Left cardiac atrium (tissue), 4 donors: ENCODE measurements at regions of chr9 and their contacts with region 1.

Region 1: GRCh38 chr9:116149844-116150243 is 3.7 kb upstream of the PAPPA start:
- DNase-seq: no peak
- ATAC-seq: no peak

Region 2: DNA sequence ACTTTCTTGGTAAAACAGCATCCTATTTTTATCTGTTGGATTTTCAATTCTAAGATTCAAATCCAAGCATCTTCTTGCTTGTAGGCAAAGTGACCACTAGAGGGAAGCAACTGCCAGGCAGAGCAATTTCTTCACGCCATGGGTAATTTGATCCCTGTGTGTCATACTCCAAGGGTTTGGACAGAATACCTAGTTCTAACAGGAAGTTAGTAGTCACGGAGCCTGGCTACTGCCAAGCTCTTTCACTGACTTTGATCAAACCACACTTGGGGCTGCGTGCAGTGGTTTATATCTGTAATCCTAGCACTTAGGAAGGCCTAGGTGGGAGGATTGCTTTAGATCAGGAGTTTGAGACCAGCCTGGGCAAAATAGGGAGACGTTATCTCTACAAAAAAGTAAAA is 558.3 kb before region 1 on chr9:
- intact Hi-C with region 1: loop called in 1 of 2 experiments (anchors 5 kb)
- DNase-seq: peak; percentile 62
- ATAC-seq: peak; percentile 88 to 92

Region 3: GRCh38 chr9:115883457-115884329 is 266.2 kb before region 1 on chr9:
- intact Hi-C with region 1: loop called in 1 of 2 experiments (anchors 10 kb)
- DNase-seq: no peak
- ATAC-seq: peak; percentile 38 to 68

Region 4: DNA sequence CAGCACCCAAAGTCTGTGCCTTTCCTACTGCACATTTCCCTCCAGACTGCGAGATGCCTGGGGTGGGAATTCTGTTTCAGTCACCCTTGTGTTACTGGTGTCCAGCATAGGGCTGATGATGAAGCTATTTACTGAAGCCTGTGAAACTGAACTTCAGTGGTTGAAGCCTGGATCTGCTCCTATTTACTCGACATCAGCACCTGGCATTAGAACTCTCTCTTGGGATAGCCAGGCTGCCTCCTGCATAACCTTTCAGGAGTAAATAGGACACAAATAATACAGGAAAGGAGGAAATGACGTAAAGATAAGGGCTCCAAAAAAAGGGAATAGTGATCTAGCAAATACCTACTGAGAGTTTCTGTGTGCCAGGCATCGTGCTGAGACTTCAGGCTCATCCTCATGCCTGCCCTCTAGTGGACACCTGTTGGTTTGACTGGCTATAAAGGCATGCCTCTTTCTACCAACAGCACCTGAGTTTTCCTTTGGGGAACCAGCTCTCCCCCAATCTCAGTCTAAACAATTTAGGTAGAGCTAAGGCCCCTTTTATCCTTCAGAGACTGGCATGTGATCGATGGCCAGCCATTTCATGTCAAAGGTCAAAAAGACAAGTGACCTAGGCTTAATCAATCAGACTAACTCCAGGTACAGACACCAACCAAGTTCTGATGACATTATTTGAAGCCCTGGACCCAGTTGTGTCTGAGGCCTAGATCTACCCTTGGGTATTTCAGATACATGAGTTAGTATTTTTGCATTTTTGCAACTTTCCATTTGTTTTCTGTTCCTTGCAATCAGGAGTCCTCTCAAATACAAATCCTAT is 345.2 kb after region 1 on chr9:
- intact Hi-C with region 1: loop called in 1 of 2 experiments (anchors 5 kb)
- DNase-seq: no peak
- ATAC-seq: no peak

Region 5: GRCh38 chr9:116572095-116572748 is 422.4 kb after region 1 on chr9:
- intact Hi-C with region 1: loop called (anchors 2 to 10 kb)
- DNase-seq: peak; percentile 93
- ATAC-seq: peak; percentile 97 to 99

Region 6: GRCh38 chr9:116661037-116661954 is 511.5 kb after region 1 on chr9:
- intact Hi-C with region 1: loop called (anchors 5 to 10 kb)
- DNase-seq: no peak
- ATAC-seq: peak; percentile 81 to 87